ENCODE measurements at regions of chr1 and their contacts with region 1.

Region 1: GRCh38 chr1:204763706-204764427 is 78.3 kb upstream of the LRRN2 start:
- DNase-seq: peak; percentile 90
- ATAC-seq: peak; percentile 95
- H3K4me3 Mint-ChIP-seq: no peak overlapping the region
- H3K27ac Mint-ChIP-seq: no peak overlapping the region
- H3K4me1 Mint-ChIP-seq: peaks cover 9% of the 10 kb centered on the region
- H3K27me3 Mint-ChIP-seq: peaks cover 8% of the 10 kb centered on the region

Region 2: DNA sequence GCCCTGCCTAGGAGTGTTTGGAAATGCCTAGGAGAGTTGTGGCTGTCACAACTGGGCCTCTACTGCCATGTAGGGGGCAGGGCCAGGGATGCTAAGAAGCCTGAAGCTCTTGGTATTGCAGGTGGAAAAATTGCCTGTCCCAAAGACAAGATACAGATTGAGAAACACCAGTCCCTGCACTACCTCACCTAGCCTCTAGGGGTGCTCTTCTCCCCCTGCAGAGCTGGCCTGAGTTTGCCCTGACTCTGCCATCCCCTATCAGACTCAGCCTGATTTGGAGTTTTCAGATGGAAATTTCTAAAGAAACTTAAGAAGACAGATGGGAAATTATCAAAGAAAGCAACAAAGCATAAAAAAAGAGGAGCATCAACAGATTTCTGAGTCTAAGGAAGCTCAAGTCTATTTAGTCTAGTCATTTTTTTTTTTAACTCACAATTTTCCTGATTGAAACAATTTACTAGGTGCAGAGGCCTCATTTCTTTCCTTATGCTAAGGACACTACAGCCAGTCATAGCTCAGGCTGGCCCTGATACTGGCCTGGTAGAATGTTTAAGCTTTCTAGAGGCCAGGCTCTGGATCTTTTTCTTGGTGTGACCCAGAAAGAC is 16.9 kb before region 1 on chr1:
- CTCF ChIA-PET with region 1: interaction called, 27 read pairs
- POLR2A ChIA-PET with region 1: interaction called, 3 read pairs
- intact Hi-C with region 1: no loop called
- DNase-seq: peak; percentile 70
- ATAC-seq: peak; percentile 85
- H3K4me3 Mint-ChIP-seq: no peak overlapping the region
- H3K27ac Mint-ChIP-seq: no peak overlapping the region
- H3K4me1 Mint-ChIP-seq: no peaks in the 10 kb centered on the region
- H3K27me3 Mint-ChIP-seq: peaks cover 6% of the 10 kb centered on the region

Region 3: DNA sequence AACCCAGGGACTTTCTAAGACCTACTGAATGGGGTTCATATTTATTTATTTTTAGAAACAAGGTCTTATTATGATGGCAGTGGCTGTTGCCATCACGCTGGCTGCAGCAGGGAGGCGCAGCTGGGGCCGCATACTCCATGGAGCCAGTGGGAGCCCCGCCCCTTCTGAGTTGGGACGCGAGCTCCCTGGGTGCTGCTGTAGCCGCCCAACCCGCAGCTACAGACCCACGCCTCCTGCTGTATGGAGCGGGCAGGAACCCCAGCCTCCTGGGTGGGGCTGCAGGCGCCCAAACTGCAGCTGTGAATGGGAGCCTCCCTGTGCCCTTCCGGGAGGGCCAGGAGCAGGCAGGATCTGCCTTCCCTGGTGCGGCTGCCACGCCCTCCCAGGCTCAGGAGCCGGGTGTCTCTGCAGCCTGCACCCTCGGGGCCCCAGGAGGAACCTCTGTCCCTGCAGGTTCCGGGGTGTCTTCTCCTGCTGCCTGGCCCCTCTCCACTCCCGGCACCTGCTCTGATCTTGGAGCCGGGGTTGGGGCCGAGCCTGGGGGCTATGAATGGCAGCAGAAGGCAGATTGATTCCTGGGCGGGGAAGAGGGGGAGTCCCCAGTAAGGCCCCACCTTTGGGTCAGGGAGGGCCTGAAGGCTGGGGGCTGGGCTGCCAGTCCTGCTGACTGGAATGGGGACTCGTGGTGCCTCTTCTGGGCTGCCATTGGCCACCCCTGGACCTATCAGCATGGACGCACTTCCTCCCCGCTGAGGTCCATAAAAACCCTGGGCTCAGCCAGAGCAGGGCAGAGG is 11.8 kb before region 1 on chr1:
- CTCF ChIA-PET with region 1: interaction called, 27 read pairs
- POLR2A ChIA-PET with region 1: interaction called, 3 read pairs
- intact Hi-C with region 1: no loop called
- DNase-seq: no peak
- ATAC-seq: no peak
- H3K4me3 Mint-ChIP-seq: no peak overlapping the region
- H3K27ac Mint-ChIP-seq: no peak overlapping the region
- H3K4me1 Mint-ChIP-seq: no peaks in the 10 kb centered on the region
- H3K27me3 Mint-ChIP-seq: no peaks in the 10 kb centered on the region

Region 4: DNA sequence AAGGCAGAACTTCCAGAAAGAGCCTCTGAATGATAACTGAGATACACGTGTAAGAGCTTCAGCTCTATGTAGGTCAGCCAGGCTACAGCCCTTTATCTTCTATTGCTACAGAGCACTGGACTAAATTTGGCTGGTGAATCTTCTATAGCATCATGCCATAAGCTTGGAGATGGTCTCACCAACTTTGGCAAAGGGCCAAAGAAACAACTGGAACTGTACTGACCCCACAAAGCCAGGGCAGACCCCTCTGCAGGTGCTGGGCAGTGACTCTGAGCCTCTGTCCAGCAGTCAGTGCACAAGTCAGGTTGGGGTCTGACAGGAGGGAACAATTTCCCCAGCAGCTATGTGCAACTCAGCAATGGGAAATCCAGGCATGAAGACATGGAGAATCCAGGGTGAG is 49.0 kb after region 1 on chr1:
- CTCF ChIA-PET with region 1: interaction called, 28 read pairs
- POLR2A ChIA-PET with region 1: no interaction called
- intact Hi-C with region 1: loop called in 1 of 2 experiments (anchors 5 kb)
- DNase-seq: no peak
- ATAC-seq: no peak
- H3K4me3 Mint-ChIP-seq: no peak overlapping the region
- H3K27ac Mint-ChIP-seq: no peak overlapping the region
- H3K4me1 Mint-ChIP-seq: no peaks in the 10 kb centered on the region
- H3K27me3 Mint-ChIP-seq: peaks cover 8% of the 10 kb centered on the region

Region 5: DNA sequence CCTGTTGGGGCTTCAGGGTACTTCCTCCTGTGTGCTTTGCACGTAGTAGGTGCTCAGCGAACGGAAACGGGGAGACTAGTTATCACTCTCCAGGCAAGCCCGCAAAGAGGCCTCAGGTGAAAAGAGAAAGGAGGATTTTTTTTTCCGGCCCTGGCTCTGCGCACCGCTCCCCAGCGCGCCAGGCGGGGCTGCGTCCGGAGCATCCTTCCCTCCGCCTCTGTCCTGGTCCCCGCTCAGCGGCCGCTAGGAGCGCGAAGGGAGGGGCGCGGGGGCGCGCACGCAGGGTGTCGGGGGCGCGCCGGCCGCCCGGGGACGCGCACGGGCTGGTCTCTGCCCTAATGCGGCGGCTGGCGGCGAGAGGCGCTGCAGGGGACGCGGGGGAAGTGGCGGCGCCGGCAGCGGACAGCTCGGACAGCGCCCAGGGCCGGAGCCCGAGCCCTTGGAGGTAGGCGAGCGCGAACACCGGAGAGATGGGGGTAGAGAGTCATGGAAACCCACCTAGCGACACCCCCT is 64.5 kb after region 1 on chr1:
- CTCF ChIA-PET with region 1: no interaction called
- POLR2A ChIA-PET with region 1: no interaction called
- intact Hi-C with region 1: no loop called
- DNase-seq: peak; percentile 74
- ATAC-seq: peak; percentile 87
- H3K4me3 Mint-ChIP-seq: no peak overlapping the region
- H3K27ac Mint-ChIP-seq: no peak overlapping the region
- H3K4me1 Mint-ChIP-seq: peaks cover 4% of the 10 kb centered on the region
- H3K27me3 Mint-ChIP-seq: peaks cover 38% of the 10 kb centered on the region

Measured in activated CD4-positive, alpha-beta T cell treated with anti-CD3 and anti-CD28 coated beads for 36 hours (primary cell).